WTC11 (cell line): ENCODE measurements at regions of chr7 and their contacts with region 1.

Region 1: DNA sequence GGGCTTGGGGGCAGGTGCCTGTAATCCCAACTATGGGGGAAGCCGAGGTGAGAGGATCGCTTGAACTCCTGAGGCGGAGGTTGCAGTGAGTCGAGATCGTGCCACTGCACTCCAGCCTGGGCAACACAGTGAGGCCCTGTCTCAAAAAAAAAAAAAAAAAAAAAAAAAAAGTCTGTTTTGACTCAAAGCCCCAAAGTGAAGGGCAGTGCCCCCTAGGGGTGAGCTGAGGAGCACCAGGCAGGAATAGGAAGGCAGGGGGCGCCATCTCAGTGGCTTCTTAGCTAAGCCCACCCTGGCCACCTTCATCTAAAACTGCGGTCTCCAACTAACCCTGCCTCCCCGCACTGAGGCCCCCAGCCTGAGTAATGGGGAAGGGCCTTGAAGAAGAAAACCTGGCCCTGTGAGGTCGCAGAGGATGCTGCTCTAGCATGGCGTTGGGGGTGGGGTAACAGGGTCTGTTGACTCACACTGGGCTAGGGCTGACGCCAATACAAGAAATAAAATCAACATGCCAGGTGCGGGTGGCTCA is 9.8 kb downstream of the PODXL start:
- DNase-seq: peak; percentile 90
- ATAC-seq: peak; percentile 85
- H3K4me3 Mint-ChIP-seq: no peak overlapping the region; the same call in 1 of the 2 replicates
- H3K27ac Mint-ChIP-seq: no peak overlapping the region
- H3K4me1 Mint-ChIP-seq: peaks cover 95% of the 10 kb centered on the region
- H3K27me3 Mint-ChIP-seq: no peaks in the 10 kb centered on the region
- CTCF ChIP-seq: peak; percentile 95

Region 2: DNA sequence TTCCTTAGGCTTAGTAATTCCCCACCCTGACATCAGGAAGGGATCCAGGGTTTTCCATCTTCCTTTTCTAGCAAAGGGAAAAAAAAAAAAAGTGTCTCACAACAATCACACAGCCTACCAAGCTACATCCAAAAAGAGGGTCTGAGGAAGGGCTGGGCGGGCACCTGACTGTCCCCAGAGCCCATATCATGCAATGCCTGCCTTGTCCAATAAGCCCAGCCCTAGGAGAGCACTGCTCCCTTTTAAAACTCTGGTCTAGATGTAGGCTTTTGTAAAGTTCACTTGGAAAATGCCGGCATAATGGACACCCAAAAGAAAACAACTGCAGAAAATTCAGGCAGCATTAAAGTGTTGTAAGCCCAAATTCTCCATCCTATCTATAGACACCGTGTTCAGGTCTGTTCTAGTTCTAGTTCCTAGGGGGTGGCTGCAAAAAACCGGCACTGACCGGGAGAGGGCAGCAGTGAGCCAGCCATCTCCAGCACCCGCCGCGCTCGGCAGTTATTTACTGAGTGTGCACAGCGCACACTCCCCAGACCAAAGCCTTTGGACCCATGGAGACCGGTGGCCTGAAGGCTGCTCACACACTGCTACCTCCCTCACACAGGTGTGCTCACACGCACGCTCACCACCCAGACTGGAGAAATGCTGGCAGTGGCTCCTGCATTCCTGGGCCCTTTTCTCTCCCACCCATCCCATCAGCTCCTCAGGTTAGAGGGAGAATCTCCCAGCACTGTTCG is 38.9 kb before region 1 on chr7:
- CTCF ChIA-PET with region 1: interaction called, 18 read pairs
- POLR2A ChIA-PET with region 1: no interaction called
- DNase-seq: peak; percentile 81
- ATAC-seq: peak; percentile 64
- H3K4me3 Mint-ChIP-seq: no peak overlapping the region
- H3K27ac Mint-ChIP-seq: peak overlapping the region; percentile 91
- H3K4me1 Mint-ChIP-seq: peaks cover 47% of the 10 kb centered on the region
- H3K27me3 Mint-ChIP-seq: no peaks in the 10 kb centered on the region
- CTCF ChIP-seq: peak; percentile 77

Region 3: GRCh38 chr7:131527456-131527855 is 19.2 kb before region 1 on chr7:
- CTCF ChIA-PET with region 1: interaction called, 22 read pairs
- POLR2A ChIA-PET with region 1: no interaction called
- DNase-seq: no peak
- ATAC-seq: no peak
- H3K4me3 Mint-ChIP-seq: no peak overlapping the region
- H3K27ac Mint-ChIP-seq: peak overlapping the region; percentile 58; the same call in 1 of the 2 replicates
- H3K4me1 Mint-ChIP-seq: peaks cover 75% of the 10 kb centered on the region
- H3K27me3 Mint-ChIP-seq: no peaks in the 10 kb centered on the region
- CTCF ChIP-seq: no peak

Region 4: DNA sequence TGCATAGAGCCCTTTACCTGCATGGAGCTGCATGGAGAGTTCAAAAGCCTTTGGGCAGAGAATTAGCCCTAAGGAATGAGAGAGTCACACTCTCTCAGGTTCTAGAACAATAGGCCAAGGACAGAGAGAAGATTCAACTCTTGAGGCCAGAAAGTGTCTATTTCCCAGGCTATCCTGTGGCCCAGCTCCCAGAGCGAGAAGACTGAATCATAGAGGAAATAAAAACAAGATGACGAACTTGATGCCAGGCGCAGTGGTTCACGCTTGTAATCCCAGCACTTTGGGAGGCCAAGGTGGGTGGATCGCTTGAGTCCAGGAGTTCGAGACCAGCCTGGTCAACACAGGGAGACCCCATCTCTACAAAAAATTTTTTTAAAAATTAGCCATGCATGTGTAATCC is 28.1 kb after region 1 on chr7:
- CTCF ChIA-PET with region 1: interaction called, 17 read pairs
- POLR2A ChIA-PET with region 1: interaction called, 13 read pairs
- DNase-seq: no peak
- ATAC-seq: no peak
- H3K4me3 Mint-ChIP-seq: no peak overlapping the region
- H3K27ac Mint-ChIP-seq: no peak overlapping the region
- H3K4me1 Mint-ChIP-seq: peaks cover 23% of the 10 kb centered on the region
- H3K27me3 Mint-ChIP-seq: peaks cover 10% of the 10 kb centered on the region
- CTCF ChIP-seq: no peak

Region 5: GRCh38 chr7:131619336-131620305 is 73.0 kb after region 1 on chr7:
- CTCF ChIA-PET with region 1: interaction called, 42 read pairs
- POLR2A ChIA-PET with region 1: no interaction called
- DNase-seq: no peak
- ATAC-seq: no peak
- H3K4me3 Mint-ChIP-seq: no peak overlapping the region
- H3K27ac Mint-ChIP-seq: 0 out of 2 replicates have a peak overlapping the region, but pooled peaks have one; percentile 76
- H3K4me1 Mint-ChIP-seq: peaks cover 59% of the 10 kb centered on the region
- H3K27me3 Mint-ChIP-seq: peaks cover 14% of the 10 kb centered on the region
- CTCF ChIP-seq: no peak

Region 6: DNA sequence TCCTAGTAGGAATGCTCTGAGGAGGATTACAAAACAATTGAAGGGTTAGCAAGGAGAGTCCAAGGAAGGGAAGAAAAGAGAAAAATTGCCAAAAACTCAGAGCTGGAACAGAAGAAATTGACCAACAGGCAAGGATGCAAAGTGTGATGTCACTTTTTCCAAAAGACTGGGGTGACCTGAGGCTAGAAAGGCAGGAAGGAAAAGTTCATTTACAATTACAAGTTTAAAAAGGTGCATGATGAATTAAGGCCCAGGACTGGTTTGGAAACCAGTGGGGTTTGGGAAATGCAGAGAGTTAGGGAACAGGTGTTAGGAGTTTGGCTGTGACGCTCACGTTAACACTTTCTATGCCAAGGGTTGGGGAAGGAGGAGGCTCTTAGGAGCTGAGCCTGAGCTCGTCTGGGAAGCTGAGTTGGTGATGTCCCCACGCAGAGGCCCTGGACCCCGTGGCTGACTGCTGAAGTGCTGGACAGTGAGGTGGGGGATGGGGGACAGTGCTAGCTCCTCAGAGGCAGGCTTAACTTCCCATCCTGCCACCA is 102.4 kb after region 1 on chr7:
- CTCF ChIA-PET with region 1: interaction called, 118 read pairs
- POLR2A ChIA-PET with region 1: interaction called, 12 read pairs
- DNase-seq: no peak
- ATAC-seq: peak; percentile 49
- H3K4me3 Mint-ChIP-seq: no peak overlapping the region
- H3K27ac Mint-ChIP-seq: peak overlapping the region; percentile 63
- H3K4me1 Mint-ChIP-seq: peaks cover 44% of the 10 kb centered on the region
- H3K27me3 Mint-ChIP-seq: peaks cover 14% of the 10 kb centered on the region
- CTCF ChIP-seq: no peak

Region 7: GRCh38 chr7:131699323-131699722 is 152.7 kb after region 1 on chr7:
- CTCF ChIA-PET with region 1: no interaction called
- POLR2A ChIA-PET with region 1: no interaction called
- DNase-seq: no peak
- ATAC-seq: no peak
- H3K4me3 Mint-ChIP-seq: no peak overlapping the region
- H3K27ac Mint-ChIP-seq: no peak overlapping the region
- H3K4me1 Mint-ChIP-seq: no peaks in the 10 kb centered on the region
- H3K27me3 Mint-ChIP-seq: peaks cover 4% of the 10 kb centered on the region; the same call in 1 of the 2 replicates
- CTCF ChIP-seq: no peak

Region 8: DNA sequence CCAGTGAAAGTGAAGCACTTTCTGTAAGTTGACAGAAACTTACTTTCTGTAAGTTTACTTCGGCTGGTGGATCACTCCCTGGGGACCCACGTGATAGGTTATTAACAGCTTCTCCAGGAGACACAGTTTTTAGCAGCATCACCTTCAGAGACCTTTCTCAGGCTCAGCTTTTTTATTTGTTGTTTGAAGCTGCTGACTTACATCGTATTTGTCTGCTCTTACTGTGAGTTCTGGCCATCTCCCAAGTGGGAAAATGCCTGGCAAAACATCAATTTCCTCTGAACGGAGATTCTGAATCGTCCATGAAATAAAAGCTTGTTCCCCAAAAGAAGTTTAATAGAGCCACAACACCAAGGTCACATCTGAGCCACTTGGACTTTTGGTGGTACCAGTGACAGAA is 188.5 kb after region 1 on chr7:
- CTCF ChIA-PET with region 1: no interaction called
- POLR2A ChIA-PET with region 1: no interaction called
- DNase-seq: no peak
- ATAC-seq: no peak
- H3K4me3 Mint-ChIP-seq: no peak overlapping the region
- H3K27ac Mint-ChIP-seq: no peak overlapping the region
- H3K4me1 Mint-ChIP-seq: peaks cover 29% of the 10 kb centered on the region
- H3K27me3 Mint-ChIP-seq: no peaks in the 10 kb centered on the region
- CTCF ChIP-seq: no peak